Psoas muscle (tissue), 8 donors: ENCODE measurements at regions of chr4 and their contacts with region 1.

Region 1: DNA sequence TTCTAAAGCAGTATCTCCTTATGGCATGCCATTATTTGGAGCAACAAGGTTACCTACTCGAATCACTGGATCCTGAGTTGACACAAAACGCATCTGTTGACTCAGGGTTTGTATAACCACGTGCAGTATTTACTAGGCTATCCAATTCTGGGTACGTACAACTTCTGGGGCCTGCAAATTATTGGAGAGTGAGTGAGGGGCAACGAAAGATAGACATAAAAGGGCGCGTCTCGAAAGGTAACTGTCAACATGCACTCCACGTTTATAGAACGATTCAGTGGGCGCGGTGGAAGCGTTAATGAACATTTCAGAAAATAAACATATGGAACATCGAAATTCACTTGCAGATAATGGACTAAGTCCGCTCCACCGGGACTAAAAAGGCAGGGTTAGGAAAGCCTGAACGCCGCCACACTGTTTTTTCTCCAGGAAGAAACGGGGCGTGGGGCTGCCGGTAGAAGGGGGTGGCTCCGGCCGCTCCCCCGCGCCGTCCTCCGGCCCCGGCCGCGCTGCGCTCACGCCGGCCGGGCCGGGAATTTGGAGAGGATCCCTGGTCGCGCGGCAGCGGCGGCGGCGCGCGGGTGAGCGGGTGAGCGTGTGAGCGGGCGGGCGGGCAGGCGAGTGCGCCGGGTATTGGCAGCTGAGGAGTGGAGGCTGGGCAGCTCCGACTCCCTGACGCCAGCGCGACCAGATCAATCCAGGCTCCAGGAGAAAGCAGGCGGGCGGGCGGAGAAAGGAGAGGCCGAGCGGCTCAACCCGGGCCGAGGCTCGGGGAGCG is at the start of gene SMAD1:
- DNase-seq: peak; percentile 88 to 95
- ATAC-seq: peak; percentile 92 to 95 (median 94)
- H3K4me3 ChIP-seq: peak within 1 kb of the TSS; percentile 98
- H3K27ac ChIP-seq: peak within 1 kb of the TSS; percentile 99
- H3K4me1 ChIP-seq: peaks cover 40% of the 10 kb centered on the region
- H3K27me3 ChIP-seq: no peaks in the 10 kb centered on the region
- CTCF ChIP-seq: no peak
- total RNA-seq, gene SMAD1: 17.2 to 30.6 (median 21.9) TPM

Region 2: DNA sequence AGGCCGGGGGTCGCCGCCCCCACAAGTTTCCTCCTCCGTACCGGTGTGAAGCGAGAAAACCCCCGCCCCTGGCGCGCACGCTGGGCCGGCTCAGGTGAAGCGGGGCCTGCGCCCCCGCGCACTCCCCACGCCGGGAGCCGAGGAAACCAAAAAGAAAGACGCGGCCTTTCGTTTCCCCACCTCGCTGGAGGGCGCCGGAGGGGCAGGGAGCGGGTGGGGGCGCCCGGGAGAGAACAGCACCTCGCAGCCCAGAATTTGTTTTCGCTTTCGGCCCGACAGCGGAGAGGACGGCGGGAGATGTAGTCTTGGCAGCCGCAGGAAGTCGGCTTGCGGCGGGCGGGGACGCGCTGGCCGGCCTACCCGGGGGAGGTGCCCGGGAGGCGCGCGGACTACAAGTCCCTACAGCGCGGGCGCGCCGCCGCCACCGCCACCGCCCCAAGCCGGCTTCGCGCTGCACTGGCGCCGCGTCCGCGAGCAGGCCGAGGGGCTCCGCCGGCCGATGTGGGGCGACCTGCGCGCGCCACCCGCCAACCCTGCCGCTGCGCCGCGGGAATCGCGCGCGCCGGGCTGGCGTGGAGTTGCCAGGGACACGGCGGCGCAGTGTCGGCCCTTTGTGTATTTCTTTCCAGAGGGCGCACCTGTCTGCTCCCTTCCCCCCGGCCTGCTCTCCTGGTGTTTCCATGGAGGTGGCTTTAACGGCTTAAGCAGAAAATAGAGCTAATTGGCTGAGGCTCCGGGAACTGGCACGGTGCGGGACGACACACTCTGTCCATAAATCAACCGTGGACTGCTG is 300.9 kb before region 1 on chr4 and contains the start of gene OTUD4:
- intact Hi-C with region 1: loop called in 1 of 2 experiments (anchors 5 kb)
- DNase-seq: peak; percentile 97 to 98
- ATAC-seq: peak; percentile 81 to 90 (median 84)
- H3K4me3 ChIP-seq: peak within 1 kb of the TSS; percentile 83
- H3K27ac ChIP-seq: peak within 1 kb of the TSS; percentile 97
- H3K4me1 ChIP-seq: peaks cover 40% of the 10 kb centered on the region
- H3K27me3 ChIP-seq: no peaks in the 10 kb centered on the region
- CTCF ChIP-seq: peak; percentile 8
- total RNA-seq, gene OTUD4: 51.6 to 88.0 (median 56.5) TPM

Region 3: GRCh38 chr4:145283909-145284308 is 197.4 kb before region 1 on chr4:
- intact Hi-C with region 1: loop called in 1 of 2 experiments (anchors 5 kb)
- DNase-seq: no peak
- ATAC-seq: peak in 1 of 4 donors; percentile 39
- H3K4me3 ChIP-seq: no peak overlapping the region
- H3K27ac ChIP-seq: no peak overlapping the region
- H3K4me1 ChIP-seq: peaks cover 55% of the 10 kb centered on the region
- H3K27me3 ChIP-seq: no peaks in the 10 kb centered on the region
- CTCF ChIP-seq: no peak

Region 4: DNA sequence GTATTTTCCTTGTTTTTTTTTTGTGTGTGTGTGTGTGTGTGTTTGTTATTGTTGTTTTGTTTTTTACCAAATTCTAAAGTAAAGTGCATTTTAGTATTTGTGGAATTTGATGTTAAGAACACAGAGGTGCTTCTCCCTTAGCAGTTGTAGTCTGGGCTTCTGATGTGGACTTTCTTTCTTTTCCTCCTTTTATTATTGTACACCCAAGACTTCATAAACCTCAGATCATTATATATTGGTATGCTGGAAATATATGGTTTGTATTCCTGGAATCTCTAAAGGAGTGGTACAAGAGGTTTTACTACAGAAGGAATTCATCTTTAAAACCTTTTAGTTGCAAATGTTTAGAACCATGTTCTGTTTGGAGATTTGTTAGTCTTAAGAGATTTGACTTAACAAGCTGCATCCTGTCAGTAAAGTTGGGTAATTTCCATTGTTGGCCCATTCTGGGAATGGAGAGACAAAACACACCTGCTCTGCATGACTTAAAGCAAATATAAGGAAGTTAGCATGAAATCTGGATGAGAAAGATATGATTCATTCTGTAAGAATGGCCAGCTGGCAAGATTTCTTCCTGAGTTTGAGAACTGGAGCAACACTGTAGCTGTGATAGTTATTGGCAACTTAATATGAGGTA is 64.3 kb after region 1 on chr4:
- intact Hi-C with region 1: loop called in 1 of 2 experiments (anchors 5 kb)
- DNase-seq: no peak
- ATAC-seq: peak in 1 of 4 donors; percentile 36
- H3K4me3 ChIP-seq: no peak overlapping the region
- H3K27ac ChIP-seq: peak overlapping the region; percentile 17
- H3K4me1 ChIP-seq: peaks cover 8% of the 10 kb centered on the region
- H3K27me3 ChIP-seq: no peaks in the 10 kb centered on the region
- CTCF ChIP-seq: no peak

Region 5: GRCh38 chr4:145565328-145565727 is 84.0 kb after region 1 on chr4:
- intact Hi-C with region 1: no loop called
- DNase-seq: no peak
- ATAC-seq: no peak
- H3K4me3 ChIP-seq: no peak overlapping the region
- H3K27ac ChIP-seq: no peak overlapping the region
- H3K4me1 ChIP-seq: no peaks in the 10 kb centered on the region
- H3K27me3 ChIP-seq: no peaks in the 10 kb centered on the region
- CTCF ChIP-seq: no peak

Region 6: GRCh38 chr4:145618932-145619638 is 137.7 kb after region 1 on chr4 and contains the start of gene MMAA:
- intact Hi-C with region 1: loop called in 1 of 2 experiments (anchors 10 kb)
- DNase-seq: peak; percentile 97 to 98
- ATAC-seq: peak; percentile 98 to 99 (median 98)
- H3K4me3 ChIP-seq: peak within 1 kb of the TSS; percentile 83
- H3K27ac ChIP-seq: peak within 1 kb of the TSS; percentile 95
- H3K4me1 ChIP-seq: peaks cover 37% of the 10 kb centered on the region
- H3K27me3 ChIP-seq: no peaks in the 10 kb centered on the region
- CTCF ChIP-seq: peak; percentile 71
- total RNA-seq, gene MMAA: 13.3 to 21.9 (median 17.2) TPM